IMR-90 (cell line): ENCODE measurements at regions of chr2 and their contacts with region 1.

Region 1: DNA sequence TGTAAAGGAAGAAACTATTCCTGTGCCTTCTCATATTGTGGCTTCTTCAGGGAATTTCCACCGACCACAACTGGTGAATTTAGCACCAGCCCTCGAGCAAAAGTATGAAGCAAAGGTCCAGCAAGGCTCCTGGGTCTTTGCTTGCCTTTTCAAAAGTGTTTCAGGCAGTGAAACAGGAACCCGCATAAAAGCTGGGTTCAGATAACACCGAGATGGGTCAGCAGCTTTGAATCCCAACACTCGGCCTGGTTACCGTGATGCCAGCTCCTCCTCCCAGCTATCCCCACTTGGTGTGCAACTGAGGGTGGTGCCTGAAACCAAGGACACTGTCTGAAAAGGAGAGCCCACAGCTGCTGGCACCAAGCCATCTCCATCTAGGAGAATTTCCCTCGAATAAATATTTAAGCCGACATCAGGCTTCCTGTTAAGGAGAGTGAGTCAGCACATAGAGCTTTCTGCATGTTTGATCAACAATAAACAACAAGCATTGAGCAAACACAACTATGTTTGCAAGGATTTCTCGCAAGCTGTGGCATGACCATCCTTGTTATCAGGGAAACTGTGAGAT is 69.5 kb downstream of the ANTXR1 start:
- DNase-seq: peak; percentile 90
- ATAC-seq: peak; percentile 78
- H3K4me3 ChIP-seq: no peak overlapping the region
- H3K27ac ChIP-seq: peak overlapping the region; percentile 83
- H3K4me1 ChIP-seq: peaks cover 22% of the 10 kb centered on the region
- H3K27me3 ChIP-seq: no peaks in the 10 kb centered on the region
- CTCF ChIP-seq: no peak
- POLR2A ChIP-seq: no peak
- RAD21 ChIP-seq: no peak

Region 2: GRCh38 chr2:68828887-68829708 is 253.4 kb before region 1 on chr2:
- CTCF ChIA-PET with region 1: no interaction called
- POLR2A ChIA-PET with region 1: no interaction called
- dilution Hi-C with region 1: no loop called
- in situ Hi-C with region 1: no loop called
- intact Hi-C with region 1: no loop called
- DNase-seq: peak; percentile 96
- ATAC-seq: peak; percentile 73
- H3K4me3 ChIP-seq: no peak overlapping the region
- H3K27ac ChIP-seq: peak overlapping the region; percentile 40
- H3K4me1 ChIP-seq: peaks cover 36% of the 10 kb centered on the region
- H3K27me3 ChIP-seq: no peaks in the 10 kb centered on the region
- CTCF ChIP-seq: no peak
- POLR2A ChIP-seq: no peak
- RAD21 ChIP-seq: 0 out of 2 replicates have a peak, but pooled peaks have one; percentile 4

Region 3: GRCh38 chr2:69046221-69046662 is 36.3 kb before region 1 on chr2:
- CTCF ChIA-PET with region 1: no interaction called
- POLR2A ChIA-PET with region 1: no interaction called
- dilution Hi-C with region 1: no loop called
- in situ Hi-C with region 1: no loop called
- intact Hi-C with region 1: loop called (anchors 5 kb)
- DNase-seq: peak; percentile 98
- ATAC-seq: peak; percentile 88
- H3K4me3 ChIP-seq: no peak overlapping the region
- H3K27ac ChIP-seq: peak overlapping the region; percentile 20
- H3K4me1 ChIP-seq: peaks cover 8% of the 10 kb centered on the region
- H3K27me3 ChIP-seq: no peaks in the 10 kb centered on the region
- CTCF ChIP-seq: no peak
- POLR2A ChIP-seq: no peak
- RAD21 ChIP-seq: no peak

Region 4: GRCh38 chr2:69131983-69132675 is 49.6 kb after region 1 on chr2:
- CTCF ChIA-PET with region 1: no interaction called
- POLR2A ChIA-PET with region 1: no interaction called
- dilution Hi-C with region 1: no loop called
- in situ Hi-C with region 1: no loop called
- intact Hi-C with region 1: no loop called
- DNase-seq: no peak
- ATAC-seq: 0 out of 2 replicates have a peak, but pooled peaks have one; percentile 14
- H3K4me3 ChIP-seq: no peak overlapping the region
- H3K27ac ChIP-seq: no peak overlapping the region
- H3K4me1 ChIP-seq: no peaks in the 10 kb centered on the region
- H3K27me3 ChIP-seq: no peaks in the 10 kb centered on the region
- CTCF ChIP-seq: no peak
- POLR2A ChIP-seq: no peak
- RAD21 ChIP-seq: no peak